Ovary (tissue), 10 donors: ENCODE measurements at regions of chr11 and their contacts with region 1.

Region 1: DNA sequence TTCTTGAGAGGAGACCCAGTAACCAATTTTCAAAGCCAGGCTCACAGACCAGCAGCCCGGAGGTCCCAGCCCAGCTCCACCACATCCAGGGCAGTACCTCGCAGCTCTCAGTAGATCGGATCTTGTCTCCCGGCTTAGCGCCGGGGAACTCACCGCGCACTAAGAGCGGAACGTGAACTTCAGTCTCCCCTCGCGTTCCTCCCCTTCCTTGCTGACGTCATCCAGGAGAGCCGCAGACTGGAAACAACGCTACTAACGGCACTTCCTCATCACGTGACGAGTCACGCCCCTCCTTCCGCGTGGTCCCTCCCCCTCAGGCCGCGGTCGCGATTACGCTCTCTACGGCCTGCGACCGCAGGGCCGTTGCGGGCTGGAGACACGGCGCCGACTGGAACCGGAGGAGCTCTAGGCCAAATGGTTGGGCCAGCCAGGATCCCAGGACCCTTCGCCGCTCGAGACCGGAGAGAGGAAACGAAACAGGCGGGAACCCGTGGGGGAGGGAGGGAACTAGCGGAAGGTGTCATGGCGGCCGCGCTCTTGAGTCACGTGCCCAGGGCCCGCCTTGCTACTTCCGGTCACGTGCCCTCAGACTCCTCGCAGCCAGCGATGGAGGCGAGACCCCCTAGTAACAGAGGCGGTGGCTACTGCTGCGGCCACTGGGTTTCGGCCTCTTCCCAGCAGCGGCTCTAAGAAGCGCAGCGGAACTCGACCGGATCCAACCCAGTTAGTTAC is at the starts of genes GTF2H1 and HPS5:
- DNase-seq: peak; percentile 94 to 97 (median 95)
- H3K4me3 ChIP-seq: peak within 1 kb of the TSS; percentile 92
- H3K27ac ChIP-seq: peak within 1 kb of the TSS; percentile 95 to 98
- H3K4me1 ChIP-seq: peaks cover 8% of the 10 kb centered on the region
- H3K27me3 ChIP-seq: no peaks in the 10 kb centered on the region
- CTCF ChIP-seq: no peak
- EP300 ChIP-seq: peak; percentile 98
- POLR2A ChIP-seq: peak; percentile 90
- total RNA-seq, gene GTF2H1: 30.0 to 48.3 (median 38.3) TPM
- total RNA-seq, gene HPS5: 17.5 to 32.7 (median 18.5) TPM

Region 2: GRCh38 chr11:17760102-17761029 is 561.8 kb before region 1 on chr11:
- intact Hi-C with region 1: no loop called
- DNase-seq: no peak
- H3K4me3 ChIP-seq: no peak overlapping the region
- H3K27ac ChIP-seq: no peak overlapping the region
- H3K4me1 ChIP-seq: no peaks in the 10 kb centered on the region
- H3K27me3 ChIP-seq: no peaks in the 10 kb centered on the region
- CTCF ChIP-seq: no peak
- EP300 ChIP-seq: no peak
- POLR2A ChIP-seq: no peak

Region 3: DNA sequence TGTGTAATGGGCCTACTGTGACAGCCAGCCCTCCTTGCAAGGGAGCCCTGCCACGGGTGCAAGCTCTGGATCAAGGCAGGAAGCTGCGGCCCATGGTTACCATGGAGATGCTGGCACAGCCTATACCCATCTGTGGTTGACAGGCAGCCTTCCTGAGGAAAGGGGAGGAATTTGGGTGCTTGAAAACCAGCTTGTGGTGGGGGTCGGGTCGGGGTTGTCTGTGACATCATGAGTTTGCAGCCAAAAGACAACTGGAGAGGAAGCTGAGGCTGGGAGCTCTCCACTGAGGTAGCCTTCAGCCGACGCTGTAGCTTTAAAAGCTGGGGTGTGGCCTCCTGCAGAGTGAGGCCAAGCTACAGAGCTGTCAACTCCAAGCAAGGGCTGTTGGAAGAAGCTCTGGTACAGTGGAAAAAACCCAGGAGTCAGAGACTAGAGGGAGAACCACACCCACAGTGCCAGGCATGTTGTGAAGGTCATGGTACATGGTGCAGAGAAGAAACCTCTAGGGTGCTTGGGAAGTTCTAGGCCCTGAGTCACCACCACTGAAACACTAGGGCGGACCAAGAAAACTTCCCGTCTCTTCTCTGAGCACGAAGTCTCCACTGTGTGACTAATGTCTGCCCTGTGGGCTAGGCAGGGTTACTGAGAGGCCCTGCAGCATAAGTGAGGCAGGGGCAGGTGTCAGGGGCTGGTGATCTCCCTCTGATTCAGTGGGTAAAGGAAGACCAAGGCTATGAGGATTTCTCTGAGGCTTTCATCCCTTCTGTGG is 61.4 kb after region 1 on chr11:
- intact Hi-C with region 1: loop called in 2 of 4 experiments (anchors 5 to 10 kb)
- DNase-seq: peak; percentile 40 to 64 (median 48)
- H3K4me3 ChIP-seq: no peak overlapping the region
- H3K27ac ChIP-seq: peak overlapping the region; percentile 23 to 84
- H3K4me1 ChIP-seq: peaks cover 10% of the 10 kb centered on the region
- H3K27me3 ChIP-seq: no peaks in the 10 kb centered on the region
- CTCF ChIP-seq: no peak
- EP300 ChIP-seq: no peak
- POLR2A ChIP-seq: no peak

Region 4: DNA sequence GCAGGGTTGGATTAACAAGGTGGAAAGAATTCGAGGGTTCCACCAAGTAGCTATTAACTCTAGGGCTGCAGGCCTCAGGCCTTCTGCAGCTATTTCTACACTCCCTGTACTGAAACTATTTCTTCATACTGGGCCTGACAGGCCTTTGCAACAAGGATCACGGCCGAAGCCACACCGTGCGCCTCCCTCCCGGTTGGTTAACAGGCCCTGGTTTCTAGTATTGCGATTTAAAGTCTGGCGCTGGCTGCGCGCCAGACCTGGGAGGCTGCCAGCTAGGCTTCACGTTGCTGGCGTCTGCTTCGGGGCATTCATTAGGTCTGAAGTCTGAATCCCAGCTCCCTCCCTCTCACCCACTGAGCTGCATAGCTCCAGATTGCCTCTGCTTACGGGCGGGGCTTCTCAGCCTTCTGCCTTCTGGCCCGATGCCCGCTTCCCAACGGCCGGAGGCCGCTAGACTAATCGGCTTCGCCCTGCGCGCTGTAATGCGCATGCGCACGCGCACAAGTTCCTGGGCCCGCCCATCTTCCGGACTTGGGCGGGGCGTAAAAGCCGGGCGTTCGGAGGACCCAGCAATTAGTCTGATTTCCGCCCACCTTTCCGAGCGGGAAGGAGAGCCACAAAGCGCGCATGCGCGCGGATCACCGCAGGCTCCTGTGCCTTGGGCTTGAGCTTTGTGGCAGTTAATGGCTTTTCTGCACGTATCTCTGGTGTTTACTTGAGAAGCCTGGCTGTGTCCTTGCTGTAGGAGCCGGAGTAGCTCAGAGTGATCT is 73.8 kb after region 1 on chr11:
- intact Hi-C with region 1: loop called in 3 of 4 experiments (anchors 2 to 5 kb)
- DNase-seq: peak; percentile 99 to 100 (median 99)
- H3K4me3 ChIP-seq: peak overlapping the region; percentile 74
- H3K27ac ChIP-seq: peak overlapping the region; percentile 76 to 92
- H3K4me1 ChIP-seq: peaks cover 3% of the 10 kb centered on the region
- H3K27me3 ChIP-seq: no peaks in the 10 kb centered on the region
- CTCF ChIP-seq: no peak
- EP300 ChIP-seq: peak; percentile 37
- POLR2A ChIP-seq: peak; percentile 68